Body of pancreas (tissue), 4 donors: ENCODE measurements at regions of chr10 and their contacts with region 1.

Region 1: DNA sequence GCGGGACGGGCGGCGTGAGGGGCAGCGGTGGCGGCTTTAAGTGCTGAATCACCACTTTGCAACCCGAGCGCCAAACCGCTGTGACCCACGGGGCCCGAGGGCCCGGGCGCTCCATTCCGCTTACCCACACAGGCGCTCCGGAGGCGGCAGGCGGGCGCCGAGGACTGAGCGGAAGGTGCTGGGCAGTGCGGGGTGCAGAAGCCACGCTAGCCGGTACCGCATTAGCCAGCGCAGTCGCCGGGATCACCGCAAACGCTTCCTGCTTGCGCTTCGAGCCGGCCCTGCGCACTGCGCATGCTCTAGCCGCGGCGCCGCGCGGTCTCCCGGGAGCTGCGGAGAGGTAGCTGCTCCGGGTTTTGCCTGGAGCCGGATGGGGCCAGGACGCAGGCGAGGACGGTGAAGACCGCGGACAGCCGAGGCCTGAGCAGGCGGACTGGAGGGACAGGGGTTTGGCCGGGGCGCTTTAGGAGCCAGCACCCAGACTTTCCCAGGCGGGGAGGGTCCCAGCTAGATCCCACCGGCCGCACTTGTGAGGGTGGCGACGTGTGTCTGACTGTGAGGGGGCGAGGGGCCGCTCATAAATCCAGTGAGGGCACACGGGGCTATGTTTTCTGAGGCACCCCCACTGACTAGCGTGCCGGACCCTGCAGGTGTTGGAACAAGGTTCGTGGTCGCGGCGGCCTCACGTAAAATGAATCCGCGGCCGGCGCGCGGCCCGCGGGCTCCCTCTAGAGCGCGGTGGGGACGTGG is at the start of gene IDE:
- DNase-seq: peak; percentile 89 to 91 (median 90)
- ATAC-seq: peak; percentile 91
- H3K4me3 ChIP-seq: peak within 1 kb of the TSS; percentile 62 to 94
- H3K27ac ChIP-seq: peak within 1 kb of the TSS; percentile 93 to 96 (median 94)
- H3K4me1 ChIP-seq: peaks cover 36% of the 10 kb centered on the region
- H3K27me3 ChIP-seq: no peaks in the 10 kb centered on the region
- CTCF ChIP-seq: peak; percentile 65 to 91 (median 88)
- POLR2A ChIP-seq: peak; percentile 62 to 85 (median 78)
- total RNA-seq, gene IDE: 13.8 to 19.5 TPM

Region 2: GRCh38 chr10:92517034-92517655 is 56.8 kb before region 1 on chr10:
- intact Hi-C with region 1: loop called (anchors 5 kb)
- DNase-seq: peak; percentile 71 to 80 (median 74)
- ATAC-seq: peak; percentile 78
- H3K4me3 ChIP-seq: no peak overlapping the region
- H3K27ac ChIP-seq: no peak overlapping the region
- H3K4me1 ChIP-seq: peaks cover 6% of the 10 kb centered on the region
- H3K27me3 ChIP-seq: no peaks in the 10 kb centered on the region
- CTCF ChIP-seq: peak; percentile 50 to 81 (median 76)
- POLR2A ChIP-seq: no peak

Region 3: GRCh38 chr10:92712016-92712889 is 138.3 kb after region 1 on chr10:
- intact Hi-C with region 1: no loop called
- DNase-seq: no peak
- ATAC-seq: no peak
- H3K4me3 ChIP-seq: no peak overlapping the region
- H3K27ac ChIP-seq: no peak overlapping the region
- H3K4me1 ChIP-seq: peaks cover 6% of the 10 kb centered on the region
- H3K27me3 ChIP-seq: no peaks in the 10 kb centered on the region
- CTCF ChIP-seq: no peak
- POLR2A ChIP-seq: no peak